ENCODE measurements at regions of chr2 and their contacts with region 1.

Region 1: DNA sequence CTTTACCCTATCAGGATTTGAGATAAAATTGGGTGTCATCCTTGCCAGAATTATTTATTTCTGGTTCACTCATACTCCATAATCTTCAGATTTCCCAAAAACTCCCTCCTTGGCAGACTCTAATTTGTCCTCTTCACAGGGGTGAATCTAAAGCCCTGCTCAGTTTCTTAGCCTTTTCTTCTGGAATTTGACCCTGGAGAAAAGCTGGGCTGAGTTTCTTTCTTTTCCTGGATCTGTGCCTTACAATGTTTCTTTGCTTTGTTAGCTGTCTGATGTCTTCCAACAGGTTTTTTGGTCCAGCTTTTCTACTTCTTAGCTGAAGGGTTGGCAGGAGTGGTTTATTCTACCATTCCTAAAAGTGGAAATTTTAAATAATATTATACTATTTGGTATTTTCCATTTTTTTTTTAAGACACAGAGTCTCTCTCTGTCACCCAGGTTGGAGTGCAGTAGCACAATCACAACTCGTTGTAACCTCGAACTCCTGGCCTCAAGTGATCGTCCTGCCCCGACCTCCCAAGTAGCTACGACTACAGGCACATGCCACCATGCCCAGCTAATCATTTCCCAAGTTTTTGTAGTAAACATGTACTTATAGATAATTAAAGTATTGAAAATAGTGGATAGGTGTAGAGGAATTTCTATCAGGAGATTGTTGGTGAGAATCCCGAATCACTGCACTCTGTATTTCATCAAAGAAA is 138.4 kb upstream of the TWIST2 start:
- H3K4me3 ChIP-seq: no peak overlapping the region
- H3K27ac ChIP-seq: no peak overlapping the region
- H3K4me1 ChIP-seq: no peaks in the 10 kb centered on the region
- CTCF ChIP-seq: no peak

Region 2: GRCh38 chr2:238615187-238615586 is 94.3 kb before region 1 on chr2:
- CTCF ChIA-PET with region 1: no interaction called
- POLR2A ChIA-PET with region 1: no interaction called
- H3K4me3 ChIP-seq: no peak overlapping the region
- H3K27ac ChIP-seq: no peak overlapping the region
- H3K4me1 ChIP-seq: no peaks in the 10 kb centered on the region
- CTCF ChIP-seq: no peak

Region 3: GRCh38 chr2:238720232-238720672 is 10.8 kb after region 1 on chr2:
- CTCF ChIA-PET with region 1: interaction called, 10 read pairs
- POLR2A ChIA-PET with region 1: no interaction called
- H3K4me3 ChIP-seq: no peak overlapping the region
- H3K27ac ChIP-seq: no peak overlapping the region
- H3K4me1 ChIP-seq: no peaks in the 10 kb centered on the region
- CTCF ChIP-seq: peak; percentile 63; the same call in 1 of the 2 replicates

Measured in HEK293 (cell line).